Heart left ventricle (tissue), 16 donors: ENCODE measurements at regions of chr1 and their contacts with region 1.

Region 1: DNA sequence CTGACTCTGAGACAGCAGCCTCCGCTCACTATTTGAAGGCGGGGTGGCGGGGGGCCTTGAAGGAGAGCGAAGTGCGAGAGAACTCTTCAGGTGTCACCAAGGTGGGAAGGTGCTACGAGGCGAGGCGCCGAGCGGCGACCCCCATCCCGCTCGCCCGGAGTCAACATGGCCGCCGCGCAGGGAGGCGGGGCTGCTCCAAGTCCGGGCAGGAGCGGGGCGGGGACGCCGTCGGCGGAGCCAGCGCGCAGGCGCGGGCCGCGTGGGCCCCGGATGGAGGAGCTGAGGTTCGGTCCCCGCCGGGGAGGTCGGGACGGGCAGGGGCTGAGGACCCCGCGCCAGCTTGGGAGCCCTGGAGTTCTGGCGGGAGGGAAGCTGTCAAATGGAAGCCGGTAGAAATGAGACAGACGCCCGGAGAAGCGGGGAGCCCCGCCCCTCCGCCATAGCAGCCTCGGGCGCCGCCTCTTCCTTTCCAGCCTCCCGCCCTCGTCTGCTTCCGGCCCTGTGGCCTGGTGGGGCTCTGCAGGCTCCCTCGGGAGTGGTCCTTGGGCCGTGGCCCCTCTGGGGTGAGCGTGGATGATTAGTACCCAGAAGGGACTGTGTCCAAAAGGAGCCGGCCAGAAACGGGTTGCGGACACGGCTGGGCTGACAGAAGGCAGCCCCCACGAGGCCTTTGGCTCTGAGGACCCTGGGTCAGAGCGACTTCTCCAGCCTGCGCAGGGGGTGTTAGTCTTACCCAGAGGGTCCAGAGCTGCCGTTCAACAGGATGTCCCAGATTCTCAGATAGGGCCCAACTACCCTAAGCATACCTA is at the start of gene PIGV:
- DNase-seq: peak; percentile 90 to 95 (median 90)
- ATAC-seq: peak; percentile 75 to 89 (median 87)
- H3K4me3 ChIP-seq: peak within 1 kb of the TSS; percentile 61 to 89 (median 75)
- H3K27ac ChIP-seq: peak within 1 kb of the TSS; percentile 96 to 100 (median 99)
- H3K4me1 ChIP-seq: peaks cover 12 to 81% (median 73%) of the 10 kb centered on the region in 12 donors
- H3K27me3 ChIP-seq: no peaks in the 10 kb centered on the region
- CTCF ChIP-seq: peak in 3 of 12 donors; percentile 6 to 32 (median 19)
- POLR2A ChIP-seq: peak in 1 of 2 donors; percentile 66
- total RNA-seq, gene PIGV: 4.3 to 8.8 (median 5.6) TPM

Region 2: DNA sequence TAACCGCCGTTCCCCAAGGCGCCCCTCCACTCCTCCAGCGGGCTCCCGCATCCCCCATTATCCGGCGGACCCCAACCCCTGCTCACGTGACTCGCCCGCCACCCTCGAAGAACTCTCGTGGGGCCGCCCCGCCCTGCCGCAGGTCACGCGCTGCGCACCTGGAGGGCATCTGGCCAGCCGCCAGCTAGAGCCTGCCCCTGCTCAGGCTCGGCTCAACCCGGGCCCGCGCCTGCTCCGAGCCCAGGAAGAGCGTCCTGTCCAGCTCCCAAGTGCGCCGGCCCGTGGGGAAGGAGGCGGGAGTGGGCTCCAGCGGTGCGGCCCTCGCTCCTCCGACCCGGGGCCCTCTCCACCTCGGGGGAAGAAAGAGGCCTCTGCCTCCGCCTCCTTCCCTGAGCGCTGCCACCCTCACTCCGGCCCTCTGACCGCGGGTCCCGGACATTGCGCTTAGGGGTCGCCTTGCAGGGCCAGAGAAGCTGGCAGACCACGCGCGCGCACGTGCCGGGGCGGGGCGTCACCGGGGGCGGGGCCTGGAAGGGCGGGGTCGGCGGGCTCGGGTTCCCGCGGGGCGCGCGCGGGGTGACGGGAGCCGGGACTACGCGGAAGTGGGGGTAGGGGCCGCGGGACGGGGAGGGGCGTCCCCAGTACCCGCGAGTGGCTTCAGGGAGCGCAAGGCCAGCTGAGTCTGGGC is 287.3 kb before region 1 on chr1:
- intact Hi-C with region 1: loop called in 3 of 10 experiments (anchors 1 to 10 kb)
- DNase-seq: peak; percentile 90 to 96 (median 92)
- ATAC-seq: peak; percentile 64 to 94 (median 92)
- H3K4me3 ChIP-seq: peak overlapping the region; percentile 52 to 80 (median 71)
- H3K27ac ChIP-seq: peak overlapping the region; percentile 70 to 97 (median 94)
- H3K4me1 ChIP-seq: peaks cover 0 to 19% (median 13%) of the 10 kb centered on the region in 12 donors
- H3K27me3 ChIP-seq: no peaks in the 10 kb centered on the region
- CTCF ChIP-seq: peak in 4 of 12 donors; percentile 0 to 36 (median 8)
- POLR2A ChIP-seq: peak in 1 of 2 donors; percentile 62

Region 3: GRCh38 chr1:26627954-26628353 is 160.0 kb before region 1 on chr1:
- intact Hi-C with region 1: no loop called
- DNase-seq: no peak
- ATAC-seq: no peak
- H3K4me3 ChIP-seq: no peak overlapping the region
- H3K27ac ChIP-seq: peak overlapping the region in 1 of 12 donors; percentile 87
- H3K4me1 ChIP-seq: peaks cover 0 to 30% (median 0%) of the 10 kb centered on the region in 12 donors
- H3K27me3 ChIP-seq: no peaks in the 10 kb centered on the region
- CTCF ChIP-seq: no peak
- POLR2A ChIP-seq: no peak

Region 4: DNA sequence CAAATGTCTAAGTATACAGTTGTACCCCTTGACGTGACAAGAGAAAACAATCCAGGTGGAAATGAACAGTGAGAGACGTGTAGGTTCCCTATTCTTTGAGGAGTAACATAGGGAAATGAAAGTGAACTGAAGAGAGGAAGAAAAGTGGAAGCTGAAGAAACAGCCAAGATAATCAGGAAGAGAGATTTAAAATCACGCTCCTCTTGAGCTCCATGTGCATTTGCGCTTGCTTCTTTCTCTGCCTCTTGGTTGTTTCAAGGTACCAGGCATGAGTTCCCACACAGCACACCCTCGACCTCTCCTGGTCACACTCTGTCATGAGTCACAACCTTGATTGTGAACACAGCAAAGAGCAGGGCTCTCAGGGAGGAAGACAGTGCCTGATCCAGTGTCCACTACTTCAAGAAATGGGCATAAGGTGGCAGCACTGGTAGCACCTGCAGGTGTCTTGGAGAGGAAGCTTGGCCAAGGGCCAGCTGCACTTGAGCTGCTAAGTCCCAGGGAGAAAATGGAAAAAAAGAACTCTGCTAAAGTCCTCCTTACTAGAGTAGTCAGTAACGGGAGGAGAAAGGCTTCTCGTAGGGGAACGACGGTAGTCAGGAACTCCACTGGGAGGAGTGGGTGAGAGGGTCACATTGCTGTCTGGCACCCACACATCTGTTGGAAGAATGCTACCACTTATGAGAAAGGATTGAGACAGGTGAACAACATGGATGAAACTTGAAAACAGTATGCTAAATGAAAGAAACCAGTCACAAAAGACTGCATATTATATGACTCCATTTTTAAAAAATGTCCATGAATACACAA is 110.4 kb before region 1 on chr1:
- intact Hi-C with region 1: loop called in 5 of 10 experiments (anchors 1 to 5 kb)
- DNase-seq: peak; percentile 70 to 83 (median 78)
- ATAC-seq: peak; percentile 91 to 98 (median 97)
- H3K4me3 ChIP-seq: peak overlapping the region in 7 of 12 donors; percentile 5 to 37 (median 25)
- H3K27ac ChIP-seq: peak overlapping the region in 6 of 12 donors; percentile 1 to 69 (median 18)
- H3K4me1 ChIP-seq: peaks cover 0 to 20% (median 7%) of the 10 kb centered on the region in 12 donors
- H3K27me3 ChIP-seq: no peaks in the 10 kb centered on the region
- CTCF ChIP-seq: peak; percentile 43 to 76 (median 58)
- POLR2A ChIP-seq: no peak

Region 5: DNA sequence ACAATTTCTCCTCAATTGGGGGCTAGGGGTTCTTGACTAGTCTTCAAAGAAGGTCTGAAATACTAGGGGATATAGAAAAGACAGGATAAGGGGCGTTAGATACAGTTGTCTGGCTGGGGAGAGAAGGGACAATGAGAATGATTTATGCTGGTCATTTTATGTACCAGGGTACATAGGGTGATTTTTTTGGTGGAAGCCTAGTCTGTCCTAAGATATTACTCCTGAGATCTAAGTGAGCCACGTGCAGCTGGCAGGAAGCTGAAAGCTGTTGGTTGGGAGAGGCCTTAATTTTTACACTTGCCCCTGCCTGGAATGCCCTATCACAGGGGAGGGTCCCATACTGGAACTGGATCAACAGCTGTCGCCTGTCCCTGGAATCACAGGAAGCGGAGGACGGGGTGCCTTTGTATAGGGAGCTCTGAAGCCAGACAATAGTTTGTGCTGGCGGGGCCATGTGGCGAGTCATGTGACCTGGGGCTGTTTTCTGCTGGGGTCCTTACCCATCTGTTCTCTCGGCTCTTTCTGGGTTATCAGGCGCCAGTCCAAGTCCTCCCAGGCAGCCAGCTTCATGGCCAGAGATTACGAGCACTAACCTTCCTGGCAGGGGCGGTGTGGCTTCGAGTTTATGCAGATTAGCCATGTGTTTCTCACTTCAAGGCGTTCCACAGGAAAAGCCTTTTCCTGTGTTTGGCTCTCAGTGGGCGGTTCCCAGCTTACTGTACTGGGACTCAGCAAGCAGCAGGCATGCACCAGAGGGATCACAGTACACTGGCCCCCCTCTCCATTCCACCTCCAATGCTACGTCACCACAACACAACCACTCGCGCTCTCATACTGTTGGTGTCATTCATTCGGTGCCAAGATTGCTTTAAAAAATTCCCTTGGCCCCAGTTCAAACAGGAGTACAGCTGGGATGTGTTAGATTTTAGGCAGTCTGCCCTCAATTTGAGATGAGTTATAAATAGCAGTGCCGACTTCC is 64.6 kb before region 1 on chr1:
- intact Hi-C with region 1: loop called in 1 of 10 experiments (anchors 2 kb)
- DNase-seq: peak; percentile 84 to 94 (median 91)
- ATAC-seq: peak; percentile 98
- H3K4me3 ChIP-seq: peak overlapping the region in 7 of 12 donors; percentile 4 to 39 (median 15)
- H3K27ac ChIP-seq: peak overlapping the region in 11 of 12 donors; percentile 38 to 72 (median 61)
- H3K4me1 ChIP-seq: peaks cover 28 to 100% (median 87%) of the 10 kb centered on the region in 12 donors
- H3K27me3 ChIP-seq: no peaks in the 10 kb centered on the region
- CTCF ChIP-seq: no peak
- POLR2A ChIP-seq: no peak

Region 6: GRCh38 chr1:26754086-26754874 is 33.6 kb before region 1 on chr1:
- intact Hi-C with region 1: loop called in 5 of 10 experiments (anchors 2 to 5 kb)
- DNase-seq: no peak
- ATAC-seq: no peak
- H3K4me3 ChIP-seq: no peak overlapping the region
- H3K27ac ChIP-seq: peak overlapping the region in 8 of 12 donors; percentile 28 to 83 (median 66)
- H3K4me1 ChIP-seq: peaks cover 8 to 64% (median 53%) of the 10 kb centered on the region in 12 donors
- H3K27me3 ChIP-seq: no peaks in the 10 kb centered on the region
- CTCF ChIP-seq: no peak
- POLR2A ChIP-seq: no peak

Region 7: DNA sequence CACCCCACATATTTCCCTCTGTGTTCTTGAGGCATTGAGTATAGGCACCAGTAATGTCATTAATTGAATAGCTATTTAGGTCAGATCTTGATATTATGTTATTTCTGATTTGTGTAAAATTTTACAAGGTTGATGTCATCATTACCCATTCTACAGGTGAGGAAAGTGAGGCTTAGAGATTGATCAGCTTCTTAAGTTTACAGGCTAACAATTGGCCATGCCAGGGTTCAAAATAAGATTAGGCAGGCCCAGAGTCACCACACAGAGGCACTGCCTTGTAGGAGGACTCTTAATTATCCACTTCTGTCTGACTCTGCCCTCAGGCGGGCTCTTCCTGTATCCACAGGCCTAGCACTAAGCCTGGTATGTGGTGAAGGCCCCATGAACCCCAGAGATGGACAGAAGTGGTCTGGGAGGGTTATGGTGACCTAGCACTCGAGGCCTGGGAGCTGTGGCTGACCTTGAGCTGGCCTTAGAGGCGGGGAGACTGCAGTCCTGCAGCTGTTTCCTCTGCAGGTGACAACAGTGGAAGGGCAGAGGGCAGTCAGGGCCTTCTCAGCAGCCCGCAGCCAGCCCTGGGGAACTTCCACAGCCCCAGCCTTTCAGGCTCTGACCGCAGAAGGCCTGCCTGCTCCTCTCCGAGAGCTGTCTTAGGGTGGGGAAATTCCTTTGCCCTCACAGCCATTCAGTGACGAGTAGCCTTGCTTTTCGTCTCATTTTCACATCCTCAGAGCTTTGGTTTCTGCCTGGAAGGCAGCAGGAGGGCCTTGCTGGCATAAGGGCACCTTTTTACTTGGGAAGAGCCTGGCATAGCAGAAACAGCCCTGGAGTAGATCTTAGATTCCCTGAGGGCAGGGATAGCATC is 50.8 kb after region 1 on chr1:
- intact Hi-C with region 1: no loop called
- DNase-seq: peak in 1 of 5 donors; percentile 51
- ATAC-seq: peak in 1 of 4 donors; percentile 41
- H3K4me3 ChIP-seq: no peak overlapping the region
- H3K27ac ChIP-seq: peak overlapping the region in 1 of 12 donors; percentile 45
- H3K4me1 ChIP-seq: peaks cover 0 to 26% (median 0%) of the 10 kb centered on the region in 12 donors
- H3K27me3 ChIP-seq: no peaks in the 10 kb centered on the region
- CTCF ChIP-seq: no peak
- POLR2A ChIP-seq: no peak

Region 8: DNA sequence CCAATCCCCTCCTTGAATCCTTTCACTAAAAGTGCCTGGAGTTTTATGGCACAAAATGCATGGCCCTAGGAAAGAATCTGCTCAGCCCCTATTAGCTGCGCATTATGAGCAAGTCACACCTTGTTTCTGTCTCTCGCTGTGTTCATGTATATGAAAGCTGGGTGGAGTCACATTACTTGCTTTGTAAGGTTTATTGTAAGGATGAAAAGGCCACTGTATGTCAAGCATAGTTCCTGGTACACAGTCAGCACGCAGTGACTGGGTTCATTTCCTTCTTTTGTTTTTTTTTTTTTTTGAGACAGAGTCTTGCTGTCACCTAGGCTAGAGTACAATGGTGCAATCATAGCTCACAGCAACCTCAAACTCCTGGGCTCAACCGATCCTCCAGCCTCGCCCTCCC is 373.7 kb after region 1 on chr1:
- intact Hi-C with region 1: no loop called
- DNase-seq: no peak
- ATAC-seq: peak in 3 of 4 donors; percentile 29 to 47 (median 46)
- H3K4me3 ChIP-seq: no peak overlapping the region
- H3K27ac ChIP-seq: no peak overlapping the region
- H3K4me1 ChIP-seq: peaks cover 0 to 10% (median 0%) of the 10 kb centered on the region in 12 donors
- H3K27me3 ChIP-seq: no peaks in the 10 kb centered on the region
- CTCF ChIP-seq: no peak
- POLR2A ChIP-seq: no peak